ENCODE measurements at regions of chr15 and their contacts with region 1.

Region 1: GRCh38 chr15:96356494-96357455 is 26.3 kb downstream of the NR2F2 start:
- DNase-seq: peak; percentile 90
- H3K4me3 ChIP-seq: peak overlapping the region; percentile 81
- H3K27ac ChIP-seq: peak overlapping the region; percentile 45
- H3K4me1 ChIP-seq: peaks cover 23% of the 10 kb centered on the region; the same call in 1 of the 2 replicates
- H3K27me3 ChIP-seq: no peaks in the 10 kb centered on the region

Region 2: DNA sequence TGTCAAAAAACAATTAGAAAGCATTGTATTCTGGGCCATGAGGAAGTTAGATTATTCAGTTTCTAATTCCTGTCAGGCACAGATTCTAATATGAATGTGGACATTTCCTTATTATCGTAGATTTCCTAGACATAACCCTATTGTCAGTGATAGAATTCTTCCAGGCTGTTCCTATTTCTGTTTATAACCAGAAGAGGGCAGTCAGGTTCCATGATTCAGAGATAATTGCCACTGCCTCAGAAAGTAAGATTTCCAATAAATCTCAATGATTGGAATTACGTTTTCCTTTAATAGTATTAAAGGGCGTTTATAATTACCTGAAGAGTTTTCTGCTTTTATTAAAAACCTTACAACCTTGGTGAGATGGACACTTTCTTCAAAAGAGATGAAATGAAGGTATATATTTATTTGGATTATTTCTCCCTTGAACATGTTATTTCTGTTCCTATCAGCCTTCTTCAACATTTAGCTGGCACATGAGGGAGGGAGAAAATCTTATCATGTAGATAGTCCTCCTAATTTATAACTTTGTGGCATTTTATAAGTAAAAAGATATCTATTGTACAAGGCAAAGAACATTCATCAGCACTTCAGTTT is 1686.2 kb before region 1 on chr15:
- in situ Hi-C with region 1: loop called (anchors 25 kb)
- DNase-seq: peak; percentile 60
- H3K4me3 ChIP-seq: no peak overlapping the region
- H3K27ac ChIP-seq: no peak overlapping the region
- H3K4me1 ChIP-seq: 0 out of 2 replicates have a peak, but pooled peaks cover 5% of the 10 kb centered on the region
- H3K27me3 ChIP-seq: no peaks in the 10 kb centered on the region; the same call in none of the 2 replicates

Region 3: GRCh38 chr15:97234851-97235610 is 878.3 kb after region 1 on chr15:
- in situ Hi-C with region 1: loop called (anchors 25 kb)
- DNase-seq: peak; percentile 71
- H3K4me3 ChIP-seq: 0 out of 2 replicates have a peak overlapping the region, but pooled peaks have one; percentile 0
- H3K27ac ChIP-seq: no peak overlapping the region
- H3K4me1 ChIP-seq: no peaks in the 10 kb centered on the region
- H3K27me3 ChIP-seq: 0 out of 2 replicates have a peak, but pooled peaks cover 8% of the 10 kb centered on the region

Measured in GM23248 (cell line).